CD8-positive, alpha-beta T cell (primary cell): ENCODE measurements at regions of chr20 and their contacts with region 1.

Region 1: GRCh38 chr20:23655491-23656211 is 17.9 kb upstream of the CST3 start:
- DNase-seq: peak in 1 of 9 experiments; percentile 18
- ATAC-seq: no peak
- H3K4me3 ChIP-seq: no peak overlapping the region
- H3K4me3 Mint-ChIP-seq: no peak overlapping the region
- H3K27ac ChIP-seq: no peak overlapping the region
- H3K27ac Mint-ChIP-seq: no peak overlapping the region
- H3K4me1 ChIP-seq: no peaks in the 10 kb centered on the region
- H3K4me1 Mint-ChIP-seq: no peaks in the 10 kb centered on the region
- H3K27me3 ChIP-seq: no peaks in the 10 kb centered on the region
- H3K27me3 Mint-ChIP-seq: peaks cover 13% of the 10 kb centered on the region
- CTCF ChIP-seq: no peak

Region 2: GRCh38 chr20:21874127-21874526 is 1781.5 kb before region 1 on chr20:
- CTCF ChIA-PET with region 1: no interaction called
- POLR2A ChIA-PET with region 1: no interaction called
- intact Hi-C with region 1: no loop called
- DNase-seq: no peak
- ATAC-seq: no peak
- H3K4me3 ChIP-seq: no peak overlapping the region
- H3K4me3 Mint-ChIP-seq: no peak overlapping the region
- H3K27ac ChIP-seq: no peak overlapping the region
- H3K27ac Mint-ChIP-seq: no peak overlapping the region
- H3K4me1 ChIP-seq: no peaks in the 10 kb centered on the region
- H3K4me1 Mint-ChIP-seq: no peaks in the 10 kb centered on the region
- H3K27me3 ChIP-seq: no peaks in the 10 kb centered on the region
- H3K27me3 Mint-ChIP-seq: no peaks in the 10 kb centered on the region
- CTCF ChIP-seq: no peak

Region 3: DNA sequence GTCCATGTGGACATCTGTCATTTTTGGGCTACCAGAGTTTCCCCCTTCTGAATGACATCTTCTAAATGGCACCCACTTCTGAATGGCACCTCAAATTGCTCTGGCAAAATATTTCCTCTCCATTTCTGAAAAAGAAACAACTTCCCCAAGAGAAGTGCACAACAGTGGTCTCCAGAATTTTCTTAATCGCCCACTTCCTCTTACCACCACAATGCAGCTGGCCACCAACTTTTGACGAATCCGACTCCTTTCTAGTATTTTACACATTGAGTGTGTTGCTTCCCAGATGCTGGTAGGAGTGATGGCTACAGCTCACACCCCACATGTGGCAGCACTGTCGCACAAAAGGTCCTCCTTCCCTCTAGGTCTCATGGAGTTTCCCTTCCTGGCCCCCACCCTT is 1287.4 kb before region 1 on chr20:
- CTCF ChIA-PET with region 1: no interaction called
- POLR2A ChIA-PET with region 1: no interaction called
- intact Hi-C with region 1: loop called in 1 of 2 experiments (anchors 10 kb)
- DNase-seq: no peak
- ATAC-seq: no peak
- H3K4me3 ChIP-seq: no peak overlapping the region
- H3K4me3 Mint-ChIP-seq: no peak overlapping the region
- H3K27ac ChIP-seq: no peak overlapping the region
- H3K27ac Mint-ChIP-seq: no peak overlapping the region
- H3K4me1 ChIP-seq: peaks cover 8% of the 10 kb centered on the region
- H3K4me1 Mint-ChIP-seq: peaks cover 23% of the 10 kb centered on the region
- H3K27me3 ChIP-seq: no peaks in the 10 kb centered on the region
- H3K27me3 Mint-ChIP-seq: no peaks in the 10 kb centered on the region
- CTCF ChIP-seq: no peak